Gastrocnemius medialis (tissue), 4 donors: ENCODE measurements at regions of chr13 and their contacts with region 1.

Region 1: GRCh38 chr13:32427852-32428580 is at the start of gene N4BP2L1:
- DNase-seq: peak; percentile 59 to 63
- ATAC-seq: peak; percentile 67 to 77
- H3K4me3 ChIP-seq: peak within 1 kb of the TSS; percentile 65 to 96 (median 82)
- H3K27ac ChIP-seq: peak within 1 kb of the TSS; percentile 87 to 96 (median 90)
- H3K4me1 ChIP-seq: peaks cover 17 to 18% of the 10 kb centered on the region in 2 donors
- H3K27me3 ChIP-seq: no peaks in the 10 kb centered on the region
- CTCF ChIP-seq: no peak
- POLR2A ChIP-seq: peak; percentile 82 to 92
- total RNA-seq, gene N4BP2L1: 6.5 to 10.0 (median 7.2) TPM

Region 2: DNA sequence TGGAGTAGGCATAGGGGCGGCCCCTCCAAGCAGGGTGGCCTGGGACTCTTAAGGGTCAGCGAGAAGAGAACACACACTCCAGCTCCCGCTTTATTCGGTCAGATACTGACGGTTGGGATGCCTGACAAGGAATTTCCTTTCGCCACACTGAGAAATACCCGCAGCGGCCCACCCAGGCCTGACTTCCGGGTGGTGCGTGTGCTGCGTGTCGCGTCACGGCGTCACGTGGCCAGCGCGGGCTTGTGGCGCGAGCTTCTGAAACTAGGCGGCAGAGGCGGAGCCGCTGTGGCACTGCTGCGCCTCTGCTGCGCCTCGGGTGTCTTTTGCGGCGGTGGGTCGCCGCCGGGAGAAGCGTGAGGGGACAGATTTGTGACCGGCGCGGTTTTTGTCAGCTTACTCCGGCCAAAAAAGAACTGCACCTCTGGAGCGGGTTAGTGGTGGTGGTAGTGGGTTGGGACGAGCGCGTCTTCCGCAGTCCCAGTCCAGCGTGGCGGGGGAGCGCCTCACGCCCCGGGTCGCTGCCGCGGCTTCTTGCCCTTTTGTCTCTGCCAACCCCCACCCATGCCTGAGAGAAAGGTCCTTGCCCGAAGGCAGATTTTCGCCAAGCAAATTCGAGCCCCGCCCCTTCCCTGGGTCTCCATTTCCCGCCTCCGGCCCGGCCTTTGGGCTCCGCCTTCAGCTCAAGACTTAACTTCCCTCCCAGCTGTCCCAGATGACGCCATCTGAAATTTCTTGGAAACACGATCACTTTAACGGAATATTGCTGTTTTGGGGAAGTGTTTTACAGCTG is 112.6 kb before region 1 on chr13 and contains the starts of genes BRCA2 and ZAR1L:
- in situ Hi-C with region 1: no loop called
- intact Hi-C with region 1: loop called (anchors 2 kb)
- DNase-seq: peak; percentile 71 to 78
- ATAC-seq: peak; percentile 94 to 95
- H3K4me3 ChIP-seq: peak within 1 kb of the TSS; percentile 63 to 89 (median 76)
- H3K27ac ChIP-seq: peak within 1 kb of the TSS; percentile 84 to 92 (median 90)
- H3K4me1 ChIP-seq: peaks cover 0 to 3% of the 10 kb centered on the region in 2 donors
- H3K27me3 ChIP-seq: no peaks in the 10 kb centered on the region
- CTCF ChIP-seq: peak in 1 of 5 experiments; percentile 9
- POLR2A ChIP-seq: peak; percentile 54 to 70
- total RNA-seq, gene BRCA2: 0.02 to 0.20 (median 0.12) TPM
- total RNA-seq, gene ZAR1L: not detected

Region 3: GRCh38 chr13:32530841-32531253 is 102.8 kb after region 1 on chr13:
- in situ Hi-C with region 1: no loop called
- intact Hi-C with region 1: loop called (anchors 2 kb)
- DNase-seq: peak; percentile 21 to 32
- ATAC-seq: peak; percentile 89 to 91
- H3K4me3 ChIP-seq: peak overlapping the region in 3 of 4 donors; percentile 0 to 24 (median 17)
- H3K27ac ChIP-seq: peak overlapping the region; percentile 72 to 96 (median 83)
- H3K4me1 ChIP-seq: peaks cover 82 to 93% of the 10 kb centered on the region in 2 donors
- H3K27me3 ChIP-seq: no peaks in the 10 kb centered on the region
- CTCF ChIP-seq: no peak
- POLR2A ChIP-seq: no peak

Region 4: GRCh38 chr13:32548837-32549236 is 120.8 kb after region 1 on chr13:
- in situ Hi-C with region 1: no loop called
- intact Hi-C with region 1: no loop called
- DNase-seq: no peak
- ATAC-seq: no peak
- H3K4me3 ChIP-seq: no peak overlapping the region
- H3K27ac ChIP-seq: no peak overlapping the region
- H3K4me1 ChIP-seq: no peaks in the 10 kb centered on the region
- H3K27me3 ChIP-seq: no peaks in the 10 kb centered on the region
- CTCF ChIP-seq: no peak
- POLR2A ChIP-seq: no peak